PC-9 (cell line): ENCODE measurements at regions of chr5 and their contacts with region 1.

Region 1: DNA sequence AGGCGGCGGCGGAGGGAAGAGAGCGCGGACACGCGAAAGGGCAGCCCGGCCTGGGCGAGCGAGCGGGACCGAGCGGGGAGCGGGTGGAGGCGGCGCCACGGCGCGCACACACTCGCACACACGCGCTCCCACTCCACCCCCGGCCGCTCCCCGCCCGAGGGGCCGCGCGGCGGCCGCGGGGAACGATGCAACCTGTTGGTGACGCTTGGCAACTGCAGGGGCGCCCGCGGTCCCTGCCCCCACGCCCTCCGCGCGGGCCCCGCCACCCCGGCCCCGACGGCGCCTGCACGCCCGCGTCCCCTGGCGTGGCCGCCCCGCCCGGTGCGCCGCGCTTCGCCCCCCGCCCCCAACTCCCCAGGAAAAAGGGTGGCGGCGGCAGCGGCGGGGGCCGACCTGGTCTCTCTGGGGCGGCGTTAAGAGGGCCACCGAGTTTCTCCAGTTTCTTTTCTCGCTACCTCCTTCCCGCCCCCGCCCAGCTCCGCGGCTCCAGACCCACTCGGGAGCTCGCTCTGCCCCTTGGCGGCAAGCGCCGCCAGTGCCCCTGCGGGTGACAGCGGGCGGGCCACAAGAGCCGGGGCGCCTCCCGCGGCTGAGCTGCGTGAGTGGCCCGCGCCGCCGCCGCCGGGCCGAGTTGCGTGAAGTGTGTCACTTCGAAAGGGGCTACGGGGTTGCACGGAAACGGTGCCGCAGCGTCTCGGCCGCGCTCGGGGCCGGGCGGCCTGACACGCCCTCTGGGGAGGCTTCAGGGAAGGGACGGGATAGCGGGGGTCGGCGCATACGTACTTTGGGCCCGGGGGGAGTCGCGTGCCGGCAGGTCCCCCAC is at the start of gene NR3C1:
- DNase-seq: peak; percentile 60 to 85
- H3K4me3 ChIP-seq: peak within 1 kb of the TSS; percentile 96
- H3K27ac ChIP-seq: peak within 1 kb of the TSS; percentile 94
- H3K4me1 ChIP-seq: peaks cover 29% of the 10 kb centered on the region
- H3K27me3 ChIP-seq: no peaks in the 10 kb centered on the region
- CTCF ChIP-seq: peak; percentile 39; the same call in 1 of the 2 replicates
- total RNA-seq, gene NR3C1: 48.8 and 52.8 TPM in 2 replicates

Region 2: DNA sequence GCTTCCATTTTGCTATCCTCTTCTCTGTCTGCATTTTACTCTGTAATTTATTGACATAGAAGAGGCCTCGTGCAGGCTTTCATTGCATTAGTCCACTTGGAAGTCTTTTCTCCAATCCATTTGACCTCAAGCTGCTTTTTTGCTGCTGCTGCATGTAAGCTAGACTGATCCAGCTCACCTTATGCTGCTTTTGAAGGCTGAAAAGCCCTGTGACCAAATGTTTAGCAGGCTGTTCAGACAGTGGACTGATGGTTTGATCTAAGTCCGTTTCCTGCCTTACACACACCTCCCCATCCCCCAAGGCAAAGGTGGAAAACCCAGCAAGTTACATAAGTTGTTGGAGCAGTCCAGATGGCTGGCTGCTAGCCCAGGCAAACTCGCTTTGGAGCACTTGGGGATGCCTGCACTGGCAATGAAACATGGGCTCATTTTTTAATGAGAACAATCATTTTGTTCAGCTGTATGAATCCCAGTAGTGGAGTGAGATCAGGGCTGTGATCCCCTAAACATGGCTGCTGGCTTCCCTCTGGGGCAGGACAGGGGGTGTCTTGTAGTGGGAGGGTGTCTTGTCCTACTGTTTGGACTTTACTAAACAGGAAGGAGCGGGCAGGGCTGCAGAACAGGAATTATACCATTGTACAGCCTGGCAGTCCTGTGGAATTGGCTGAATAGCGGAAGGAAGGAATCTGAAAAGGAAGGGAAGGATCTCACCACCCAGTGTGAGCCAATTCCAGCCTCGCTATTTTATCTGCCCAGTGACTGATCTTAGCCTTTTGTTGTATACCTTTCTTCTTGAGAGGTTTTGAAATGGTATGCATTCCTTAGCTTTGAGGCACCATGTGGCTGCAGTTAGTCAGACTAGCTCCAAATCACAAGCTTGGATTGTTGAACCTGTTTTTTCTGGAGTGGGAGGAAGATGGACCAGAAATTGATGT is 421.7 kb before region 1 on chr5:
- CTCF ChIA-PET with region 1: no interaction called
- POLR2A ChIA-PET with region 1: interaction called, 9 read pairs
- intact Hi-C with region 1: loop called (anchors 2 kb)
- DNase-seq: peak; percentile 69 to 96
- H3K4me3 ChIP-seq: peak overlapping the region; percentile 29; the same call in 1 of the 2 replicates
- H3K27ac ChIP-seq: peak overlapping the region; percentile 90
- H3K4me1 ChIP-seq: peaks cover 33% of the 10 kb centered on the region
- H3K27me3 ChIP-seq: no peaks in the 10 kb centered on the region
- CTCF ChIP-seq: no peak

Region 3: GRCh38 chr5:143177263-143177983 is 226.4 kb before region 1 on chr5:
- CTCF ChIA-PET with region 1: interaction called, 3 read pairs
- POLR2A ChIA-PET with region 1: no interaction called
- intact Hi-C with region 1: loop called (anchors 10 kb)
- DNase-seq: peak in 1 of 2 experiments; percentile 72
- H3K4me3 ChIP-seq: no peak overlapping the region
- H3K27ac ChIP-seq: no peak overlapping the region
- H3K4me1 ChIP-seq: no peaks in the 10 kb centered on the region
- H3K27me3 ChIP-seq: no peaks in the 10 kb centered on the region
- CTCF ChIP-seq: no peak

Region 4: DNA sequence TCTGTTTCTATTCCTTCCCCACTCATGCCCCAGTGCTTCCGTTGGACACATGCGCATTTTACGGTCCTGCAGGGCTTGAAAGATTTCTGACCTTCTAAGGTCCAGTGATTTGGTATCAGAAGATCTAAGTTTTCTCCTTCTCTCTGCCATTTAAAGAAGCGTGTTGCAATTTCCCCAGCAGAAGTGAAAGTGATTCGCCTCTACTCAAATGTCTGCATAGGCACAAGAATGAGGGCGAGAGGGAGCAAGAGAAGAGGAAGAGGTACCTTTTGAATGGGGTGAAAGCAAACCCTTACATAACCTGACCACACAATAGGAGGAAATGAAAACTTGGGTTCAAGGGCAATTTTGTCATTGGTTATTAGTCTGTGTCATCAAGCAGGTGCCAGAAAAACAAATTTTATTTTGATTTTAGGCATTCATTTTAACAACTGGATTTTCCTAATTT is 31.4 kb after region 1 on chr5:
- CTCF ChIA-PET with region 1: no interaction called
- POLR2A ChIA-PET with region 1: no interaction called
- intact Hi-C with region 1: no loop called
- DNase-seq: no peak
- H3K4me3 ChIP-seq: no peak overlapping the region
- H3K27ac ChIP-seq: no peak overlapping the region
- H3K4me1 ChIP-seq: peaks cover 10% of the 10 kb centered on the region; the same call in 1 of the 2 replicates
- H3K27me3 ChIP-seq: no peaks in the 10 kb centered on the region
- CTCF ChIP-seq: no peak

Region 5: GRCh38 chr5:143536364-143536763 is 132.6 kb after region 1 on chr5:
- CTCF ChIA-PET with region 1: no interaction called
- POLR2A ChIA-PET with region 1: no interaction called
- intact Hi-C with region 1: loop called (anchors 1 kb)
- DNase-seq: peak; percentile 78 to 79
- H3K4me3 ChIP-seq: no peak overlapping the region
- H3K27ac ChIP-seq: peak overlapping the region; percentile 17
- H3K4me1 ChIP-seq: peaks cover 15% of the 10 kb centered on the region
- H3K27me3 ChIP-seq: no peaks in the 10 kb centered on the region
- CTCF ChIP-seq: no peak

Region 6: DNA sequence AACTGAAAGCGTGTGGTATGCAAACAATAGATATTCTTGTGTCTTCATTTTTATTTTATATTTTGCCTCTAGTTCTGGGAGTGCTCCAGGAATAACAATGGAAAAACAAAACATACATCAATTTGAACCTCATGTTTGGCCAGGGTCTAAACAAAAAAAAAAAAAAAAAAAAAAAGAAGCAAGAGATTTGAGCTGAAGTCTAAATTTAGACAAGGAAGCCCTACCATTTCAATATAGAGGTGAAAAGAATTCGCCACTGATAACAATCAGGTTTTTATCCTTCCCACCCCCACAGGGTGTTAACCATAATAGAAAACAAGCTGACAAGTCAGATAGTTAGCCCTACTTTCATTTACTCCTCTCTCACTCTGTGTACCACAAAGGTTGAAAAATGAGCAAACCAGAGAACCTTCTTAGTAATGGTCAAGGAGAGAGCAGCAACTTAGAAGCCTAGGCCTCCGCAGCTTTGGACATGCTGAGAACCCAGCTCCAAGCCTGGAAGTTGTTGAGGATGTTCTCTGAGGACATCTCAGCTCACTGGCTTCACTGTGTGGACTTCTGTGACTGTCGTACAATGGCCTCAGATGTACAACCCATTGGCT is 289.9 kb after region 1 on chr5:
- CTCF ChIA-PET with region 1: no interaction called
- POLR2A ChIA-PET with region 1: no interaction called
- intact Hi-C with region 1: loop called (anchors 1 kb)
- DNase-seq: no peak
- H3K4me3 ChIP-seq: no peak overlapping the region
- H3K27ac ChIP-seq: no peak overlapping the region
- H3K4me1 ChIP-seq: no peaks in the 10 kb centered on the region
- H3K27me3 ChIP-seq: no peaks in the 10 kb centered on the region
- CTCF ChIP-seq: no peak

Region 7: DNA sequence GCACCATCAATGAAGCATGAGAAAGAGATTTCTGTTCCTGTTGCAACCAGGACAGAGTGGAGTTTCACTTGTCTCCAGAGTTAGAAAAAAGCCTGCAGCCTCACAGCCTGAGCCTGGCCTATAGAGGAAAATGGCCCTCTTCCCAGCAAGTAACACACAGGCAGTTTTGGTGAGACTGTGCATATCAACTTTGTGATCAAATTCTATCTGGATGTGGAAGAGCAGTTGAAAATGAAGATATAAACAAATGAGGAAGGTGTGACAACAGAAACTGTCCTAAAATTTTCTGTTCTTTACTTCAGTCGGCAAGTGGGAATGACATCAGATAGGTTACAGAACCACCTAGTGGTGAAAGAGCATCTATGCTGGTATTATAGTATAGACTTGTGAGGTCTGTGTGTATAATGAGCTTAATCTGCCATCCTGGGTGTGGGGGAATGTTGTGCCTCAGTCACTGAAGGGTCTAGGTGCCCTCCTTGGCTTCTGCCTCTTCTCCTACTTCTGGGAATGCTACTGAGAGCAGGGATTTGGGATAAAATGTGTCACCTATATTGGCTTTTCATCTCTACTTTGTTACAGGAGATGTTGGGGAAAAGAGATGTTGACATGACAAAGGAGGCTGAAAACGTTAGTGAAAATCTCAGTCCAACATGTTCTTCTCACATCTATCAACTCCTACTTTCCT is 738.5 kb after region 1 on chr5:
- CTCF ChIA-PET with region 1: no interaction called
- POLR2A ChIA-PET with region 1: no interaction called
- intact Hi-C with region 1: loop called (anchors 2 kb)
- DNase-seq: peak in 1 of 2 experiments; percentile 11
- H3K4me3 ChIP-seq: no peak overlapping the region
- H3K27ac ChIP-seq: no peak overlapping the region
- H3K4me1 ChIP-seq: 0 out of 2 replicates have a peak, but pooled peaks cover 8% of the 10 kb centered on the region
- H3K27me3 ChIP-seq: no peaks in the 10 kb centered on the region
- CTCF ChIP-seq: peak; percentile 85

Region 8: DNA sequence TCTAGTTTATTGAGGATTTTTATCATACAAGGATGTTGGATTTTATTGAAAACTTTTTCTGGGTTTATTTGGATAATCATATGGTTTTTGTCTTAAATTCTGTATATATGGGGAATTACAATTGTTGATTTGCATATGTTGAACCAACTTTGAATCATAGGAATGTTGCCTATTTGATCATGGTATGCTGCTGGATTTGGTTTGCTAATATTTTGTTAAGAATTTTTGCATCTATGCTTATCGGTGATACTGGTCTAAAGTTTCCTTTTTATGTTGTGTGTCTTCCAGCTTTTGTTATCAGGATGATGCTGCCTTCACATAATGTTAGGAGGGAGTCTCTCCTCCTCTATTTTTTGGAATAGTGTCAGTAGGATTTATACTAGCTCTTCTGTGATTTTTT is 1686.3 kb after region 1 on chr5:
- CTCF ChIA-PET with region 1: no interaction called
- POLR2A ChIA-PET with region 1: no interaction called
- intact Hi-C with region 1: no loop called
- DNase-seq: no peak
- H3K4me3 ChIP-seq: no peak overlapping the region
- H3K27ac ChIP-seq: no peak overlapping the region
- H3K4me1 ChIP-seq: no peaks in the 10 kb centered on the region
- H3K27me3 ChIP-seq: no peaks in the 10 kb centered on the region
- CTCF ChIP-seq: no peak